GM12878 (cell line): ENCODE measurements at regions of chr7 and their contacts with region 1.

Region 1: DNA sequence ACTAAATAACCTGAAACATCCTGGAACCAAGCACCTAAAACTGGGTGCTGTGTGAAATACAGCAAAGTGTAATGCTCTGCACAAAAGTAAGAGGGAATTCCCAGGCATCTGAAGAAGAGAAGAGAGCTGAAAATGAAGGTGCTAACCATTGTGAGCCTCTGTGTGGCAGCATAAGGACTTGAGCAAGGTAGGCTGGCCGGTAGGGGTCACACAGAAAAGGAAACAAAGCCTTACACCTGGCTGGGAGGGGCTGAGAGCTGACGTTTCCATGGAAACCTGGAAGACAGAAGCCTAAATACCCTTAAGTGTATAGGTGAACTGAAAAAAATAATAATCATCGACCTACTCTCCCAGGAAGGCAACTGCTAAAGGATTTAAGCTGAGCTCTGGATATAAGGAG is 48.6 kb downstream of the CUL1 start:
- DNase-seq: no peak
- ATAC-seq: peak; percentile 78
- H3K4me3 ChIP-seq: no peak overlapping the region
- H3K27ac ChIP-seq: no peak overlapping the region
- H3K4me1 ChIP-seq: no peaks in the 10 kb centered on the region
- H3K27me3 ChIP-seq: no peaks in the 10 kb centered on the region
- CTCF ChIP-seq: peak in 2 of 3 experiments; percentile 27 to 36; a peak in 3 of 6 replicates
- EP300 ChIP-seq: no peak
- POLR2A ChIP-seq: no peak
- RAD21 ChIP-seq: no peak

Region 2: DNA sequence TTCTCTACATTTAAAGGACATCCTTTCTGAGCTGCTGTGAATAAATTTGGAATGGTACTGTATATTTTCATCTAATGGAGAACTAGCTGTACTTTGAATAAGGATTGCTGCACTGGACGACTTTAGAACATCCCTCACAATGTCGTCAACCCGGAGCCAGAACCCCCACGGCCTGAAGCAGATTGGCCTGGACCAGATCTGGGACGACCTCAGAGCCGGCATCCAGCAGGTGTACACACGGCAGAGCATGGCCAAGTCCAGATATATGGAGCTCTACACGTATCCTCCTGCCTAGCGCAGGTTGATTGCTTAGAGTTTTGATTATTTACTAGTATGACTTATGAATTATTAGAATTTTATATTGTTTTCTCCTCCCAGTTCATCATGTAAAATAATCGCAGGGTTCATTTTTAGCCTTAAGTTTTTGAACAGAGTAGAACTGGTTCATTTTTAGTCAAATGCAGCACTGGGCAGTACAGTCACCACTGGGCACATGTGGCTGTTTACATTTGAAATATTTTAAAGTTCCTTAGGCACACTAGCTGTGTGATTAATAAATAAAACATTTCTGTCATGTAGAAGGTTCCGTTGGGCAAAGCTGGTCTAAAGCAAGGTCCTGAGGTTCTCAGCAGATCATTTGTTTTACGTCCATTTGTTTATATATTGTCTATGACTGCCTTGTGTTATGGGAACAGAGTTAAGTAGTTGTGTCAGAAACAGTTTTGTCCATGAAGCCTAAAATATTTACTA is 17.1 kb before region 1 on chr7:
- CTCF ChIA-PET with region 1: interaction called, 6 read pairs
- POLR2A ChIA-PET with region 1: no interaction called
- RAD21 ChIA-PET with region 1: no interaction called
- SMC1A ChIA-PET with region 1: interaction called, 10 read pairs
- in situ Hi-C with region 1: no loop called
- intact Hi-C with region 1: no loop called
- DNase-seq: no peak
- ATAC-seq: no peak
- H3K4me3 ChIP-seq: no peak overlapping the region
- H3K27ac ChIP-seq: no peak overlapping the region
- H3K4me1 ChIP-seq: peaks cover 9% of the 10 kb centered on the region
- H3K27me3 ChIP-seq: no peaks in the 10 kb centered on the region
- CTCF ChIP-seq: no peak
- EP300 ChIP-seq: no peak
- POLR2A ChIP-seq: no peak
- RAD21 ChIP-seq: no peak